ENCODE measurements at regions of chr2 and their contacts with region 1.

Region 1: GRCh38 chr2:85226783-85227182 is 93.6 kb downstream of the TCF7L1 start:
- DNase-seq: no peak
- ATAC-seq: no peak
- H3K4me3 ChIP-seq: no peak overlapping the region
- H3K4me3 Mint-ChIP-seq: no peak overlapping the region
- H3K27ac ChIP-seq: no peak overlapping the region
- H3K27ac Mint-ChIP-seq: no peak overlapping the region
- H3K4me1 ChIP-seq: no peaks in the 10 kb centered on the region
- H3K4me1 Mint-ChIP-seq: no peaks in the 10 kb centered on the region
- H3K27me3 ChIP-seq: no peaks in the 10 kb centered on the region
- H3K27me3 Mint-ChIP-seq: peaks cover 18% of the 10 kb centered on the region
- CTCF ChIP-seq: no peak

Region 2: GRCh38 chr2:85199698-85200097 is 27.1 kb before region 1 on chr2:
- CTCF ChIA-PET with region 1: no interaction called
- POLR2A ChIA-PET with region 1: no interaction called
- intact Hi-C with region 1: loop called (anchors 1 kb)
- DNase-seq: no peak
- ATAC-seq: no peak
- H3K4me3 ChIP-seq: no peak overlapping the region
- H3K4me3 Mint-ChIP-seq: no peak overlapping the region
- H3K27ac ChIP-seq: no peak overlapping the region
- H3K27ac Mint-ChIP-seq: no peak overlapping the region
- H3K4me1 ChIP-seq: no peaks in the 10 kb centered on the region
- H3K4me1 Mint-ChIP-seq: no peaks in the 10 kb centered on the region
- H3K27me3 ChIP-seq: peaks cover 0 to 2% (median 0%) of the 10 kb centered on the region in 4 experiments
- H3K27me3 Mint-ChIP-seq: peaks cover 11% of the 10 kb centered on the region
- CTCF ChIP-seq: no peak